Activated CD4-positive, alpha-beta T cell treated with anti-CD3 and anti-CD28 coated beads, Interleukin-2, amount 10 ng/mL, durations not matched to agents 7 days and 5 days (primary cell): ENCODE measurements at regions of chr12 and their contacts with region 1.

Region 1: DNA sequence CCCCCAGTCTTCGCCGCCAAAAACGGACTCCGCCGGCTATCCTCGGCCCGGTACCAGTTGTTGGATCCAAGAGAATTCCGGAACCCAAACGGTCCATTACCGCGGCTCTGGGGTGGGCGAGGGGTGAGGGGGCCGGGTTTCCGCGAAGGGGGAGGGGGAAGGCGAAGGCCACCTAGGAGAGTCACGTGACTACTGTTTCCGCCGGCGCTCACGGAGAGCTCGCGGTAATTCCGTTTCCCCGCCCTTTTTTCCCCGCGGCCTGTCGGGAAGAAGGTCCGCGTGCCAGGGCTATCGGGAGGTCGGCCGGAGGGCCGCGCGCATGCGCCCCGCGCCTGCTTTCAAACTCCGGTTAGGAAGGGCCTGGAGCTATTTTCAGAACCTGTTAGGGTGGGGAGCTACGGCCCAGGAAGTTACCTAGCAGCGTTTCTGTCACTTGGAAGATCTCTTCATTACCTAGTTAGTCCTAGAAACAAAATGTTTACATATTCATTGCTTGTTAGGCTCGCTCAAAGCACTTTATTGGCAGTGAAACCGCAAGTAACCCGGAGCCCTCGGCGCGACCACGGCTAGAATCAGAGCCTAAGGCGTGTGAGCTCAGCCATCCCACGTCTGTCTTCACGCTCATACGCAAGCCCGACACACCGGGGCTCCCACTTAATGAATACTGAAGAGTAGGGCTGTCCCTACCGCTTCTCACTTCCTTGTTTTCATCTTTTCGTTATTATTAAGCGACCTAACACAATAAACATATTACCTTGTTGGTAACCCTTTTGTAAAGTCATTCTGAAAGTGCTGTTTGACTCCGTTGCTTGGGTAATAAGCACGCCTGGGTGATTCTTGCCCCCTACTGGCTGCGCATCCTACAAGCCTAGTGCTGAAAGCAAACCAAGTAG is 624 bp upstream of the SBNO1 start:
- DNase-seq: peak; percentile 98
- H3K4me3 Mint-ChIP-seq: peak overlapping the region; percentile 83
- H3K27ac Mint-ChIP-seq: peak overlapping the region; percentile 93
- H3K4me1 Mint-ChIP-seq: peaks cover 10% of the 10 kb centered on the region
- H3K27me3 Mint-ChIP-seq: no peaks in the 10 kb centered on the region

Region 2: GRCh38 chr12:123180171-123180570 is 185.1 kb before region 1 on chr12:
- CTCF ChIA-PET with region 1: no interaction called
- POLR2A ChIA-PET with region 1: no interaction called
- DNase-seq: no peak
- H3K4me3 Mint-ChIP-seq: no peak overlapping the region
- H3K27ac Mint-ChIP-seq: no peak overlapping the region
- H3K4me1 Mint-ChIP-seq: no peaks in the 10 kb centered on the region
- H3K27me3 Mint-ChIP-seq: no peaks in the 10 kb centered on the region

Region 3: GRCh38 chr12:123270214-123271000 is 94.9 kb before region 1 on chr12:
- CTCF ChIA-PET with region 1: interaction called, 15 read pairs
- POLR2A ChIA-PET with region 1: no interaction called
- DNase-seq: no peak
- H3K4me3 Mint-ChIP-seq: peak overlapping the region; percentile 78
- H3K27ac Mint-ChIP-seq: peak overlapping the region; percentile 86
- H3K4me1 Mint-ChIP-seq: peaks cover 31% of the 10 kb centered on the region
- H3K27me3 Mint-ChIP-seq: no peaks in the 10 kb centered on the region

Region 4: GRCh38 chr12:123351349-123351748 is 13.9 kb before region 1 on chr12:
- CTCF ChIA-PET with region 1: interaction called, 10 read pairs
- POLR2A ChIA-PET with region 1: interaction called, 3 read pairs
- DNase-seq: no peak
- H3K4me3 Mint-ChIP-seq: no peak overlapping the region
- H3K27ac Mint-ChIP-seq: no peak overlapping the region
- H3K4me1 Mint-ChIP-seq: peaks cover 34% of the 10 kb centered on the region
- H3K27me3 Mint-ChIP-seq: no peaks in the 10 kb centered on the region

Region 5: DNA sequence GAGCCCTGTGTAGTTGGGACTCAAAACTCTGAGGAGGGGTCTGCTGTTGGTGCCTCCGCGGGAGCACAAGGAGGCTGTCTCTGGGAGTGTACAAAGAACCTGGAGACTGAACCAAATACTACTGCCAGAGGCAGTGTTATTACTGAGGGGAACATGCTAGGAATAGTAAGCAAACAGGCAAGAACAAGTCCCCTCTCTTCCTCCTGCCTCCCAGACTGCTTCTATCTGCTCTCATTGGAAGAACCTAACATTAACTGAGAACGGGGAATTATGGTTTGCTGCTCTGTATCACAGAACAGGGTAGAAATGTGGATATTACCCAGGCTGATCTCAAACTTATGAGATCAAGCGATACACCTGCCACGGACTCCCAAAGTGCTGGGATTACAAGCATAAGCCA is 14.1 kb after region 1 on chr12:
- CTCF ChIA-PET with region 1: interaction called, 28 read pairs
- POLR2A ChIA-PET with region 1: interaction called, 11 read pairs
- DNase-seq: no peak
- H3K4me3 Mint-ChIP-seq: no peak overlapping the region
- H3K27ac Mint-ChIP-seq: no peak overlapping the region
- H3K4me1 Mint-ChIP-seq: peaks cover 6% of the 10 kb centered on the region
- H3K27me3 Mint-ChIP-seq: no peaks in the 10 kb centered on the region

Region 6: GRCh38 chr12:123384318-123384993 is 19.2 kb after region 1 on chr12:
- CTCF ChIA-PET with region 1: interaction called, 28 read pairs
- POLR2A ChIA-PET with region 1: interaction called, 11 read pairs
- DNase-seq: peak; percentile 32
- H3K4me3 Mint-ChIP-seq: peak overlapping the region; percentile 97
- H3K27ac Mint-ChIP-seq: peak overlapping the region; percentile 91
- H3K4me1 Mint-ChIP-seq: peaks cover 27% of the 10 kb centered on the region
- H3K27me3 Mint-ChIP-seq: no peaks in the 10 kb centered on the region